CD4-positive, alpha-beta T cell (primary cell): ENCODE measurements at regions of chr11 and their contacts with region 1.

Region 1: GRCh38 chr11:34051349-34052035 is at the start of gene CAPRIN1:
- DNase-seq: peak; percentile 70 to 93 (median 80)
- ATAC-seq: peak; percentile 69
- H3K4me3 ChIP-seq: peak within 1 kb of the TSS; percentile 99
- H3K4me3 Mint-ChIP-seq: peak within 1 kb of the TSS; percentile 95
- H3K27ac ChIP-seq: peak within 1 kb of the TSS; percentile 98 to 99
- H3K27ac Mint-ChIP-seq: peak within 1 kb of the TSS; percentile 100
- H3K4me1 ChIP-seq: peaks cover 25% of the 10 kb centered on the region
- H3K4me1 Mint-ChIP-seq: peaks cover 26% of the 10 kb centered on the region
- H3K27me3 ChIP-seq: no peaks in the 10 kb centered on the region
- H3K27me3 Mint-ChIP-seq: no peaks in the 10 kb centered on the region
- CTCF ChIP-seq: no peak
- total RNA-seq, gene CAPRIN1: 107 TPM

Region 2: DNA sequence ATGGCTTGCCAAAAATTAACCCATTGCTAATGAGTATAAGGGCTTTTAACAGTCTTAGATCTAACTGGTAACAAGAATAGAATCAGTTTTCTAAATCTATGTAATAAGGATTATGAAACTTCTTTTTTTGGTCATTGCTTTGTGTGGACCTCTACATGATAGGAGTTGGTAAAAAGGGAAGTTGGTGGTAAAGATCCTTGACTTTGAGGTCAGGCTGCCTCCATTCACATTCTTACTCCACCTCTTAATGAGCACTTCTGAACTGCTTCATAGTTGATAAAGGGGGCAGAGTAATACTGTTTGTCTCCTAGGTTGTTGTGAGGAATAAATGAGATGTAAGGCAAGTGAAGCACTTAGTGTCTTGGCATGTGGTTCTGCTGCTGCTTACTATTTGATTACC is 1457.2 kb before region 1 on chr11:
- CTCF ChIA-PET with region 1: no interaction called
- POLR2A ChIA-PET with region 1: no interaction called
- intact Hi-C with region 1: loop called in 1 of 2 experiments (anchors 5 kb)
- DNase-seq: no peak
- ATAC-seq: no peak
- H3K4me3 ChIP-seq: no peak overlapping the region
- H3K4me3 Mint-ChIP-seq: no peak overlapping the region
- H3K27ac ChIP-seq: no peak overlapping the region
- H3K27ac Mint-ChIP-seq: no peak overlapping the region
- H3K4me1 ChIP-seq: no peaks in the 10 kb centered on the region
- H3K4me1 Mint-ChIP-seq: peaks cover 29% of the 10 kb centered on the region
- H3K27me3 ChIP-seq: no peaks in the 10 kb centered on the region
- H3K27me3 Mint-ChIP-seq: no peaks in the 10 kb centered on the region
- CTCF ChIP-seq: no peak

Region 3: GRCh38 chr11:33970984-33971466 is 80.5 kb before region 1 on chr11:
- CTCF ChIA-PET with region 1: no interaction called
- POLR2A ChIA-PET with region 1: no interaction called
- intact Hi-C with region 1: no loop called
- DNase-seq: peak in 5 of 14 experiments; percentile 4 to 49 (median 24)
- ATAC-seq: no peak
- H3K4me3 ChIP-seq: no peak overlapping the region
- H3K4me3 Mint-ChIP-seq: no peak overlapping the region
- H3K27ac ChIP-seq: no peak overlapping the region
- H3K27ac Mint-ChIP-seq: no peak overlapping the region
- H3K4me1 ChIP-seq: no peaks in the 10 kb centered on the region
- H3K4me1 Mint-ChIP-seq: no peaks in the 10 kb centered on the region
- H3K27me3 ChIP-seq: peaks cover 0 to 3% of the 10 kb centered on the region in 2 experiments
- H3K27me3 Mint-ChIP-seq: peaks cover 5% of the 10 kb centered on the region
- CTCF ChIP-seq: no peak

Region 4: GRCh38 chr11:33996498-33997454 is 54.7 kb before region 1 on chr11:
- CTCF ChIA-PET with region 1: interaction called, 8 read pairs
- POLR2A ChIA-PET with region 1: interaction called, 3 read pairs
- intact Hi-C with region 1: loop called (anchors 2 to 5 kb)
- DNase-seq: peak; percentile 53 to 85 (median 66)
- ATAC-seq: peak; percentile 100
- H3K4me3 ChIP-seq: no peak overlapping the region
- H3K4me3 Mint-ChIP-seq: peak overlapping the region; percentile 55
- H3K27ac ChIP-seq: no peak overlapping the region
- H3K27ac Mint-ChIP-seq: no peak overlapping the region
- H3K4me1 ChIP-seq: peaks cover 7% of the 10 kb centered on the region
- H3K4me1 Mint-ChIP-seq: peaks cover 7% of the 10 kb centered on the region
- H3K27me3 ChIP-seq: no peaks in the 10 kb centered on the region
- H3K27me3 Mint-ChIP-seq: peaks cover 23% of the 10 kb centered on the region
- CTCF ChIP-seq: peak; percentile 76

Region 5: GRCh38 chr11:34075178-34075820 is 23.8 kb after region 1 on chr11:
- CTCF ChIA-PET with region 1: interaction called, 5 read pairs
- POLR2A ChIA-PET with region 1: interaction called, 4 read pairs
- intact Hi-C with region 1: loop called in 1 of 2 experiments (anchors 2 kb)
- DNase-seq: no peak
- ATAC-seq: no peak
- H3K4me3 ChIP-seq: no peak overlapping the region
- H3K4me3 Mint-ChIP-seq: no peak overlapping the region
- H3K27ac ChIP-seq: peak overlapping the region; percentile 1 to 13
- H3K27ac Mint-ChIP-seq: peak overlapping the region; percentile 67
- H3K4me1 ChIP-seq: peaks cover 14% of the 10 kb centered on the region
- H3K4me1 Mint-ChIP-seq: peaks cover 57% of the 10 kb centered on the region
- H3K27me3 ChIP-seq: no peaks in the 10 kb centered on the region
- H3K27me3 Mint-ChIP-seq: no peaks in the 10 kb centered on the region
- CTCF ChIP-seq: no peak

Region 6: DNA sequence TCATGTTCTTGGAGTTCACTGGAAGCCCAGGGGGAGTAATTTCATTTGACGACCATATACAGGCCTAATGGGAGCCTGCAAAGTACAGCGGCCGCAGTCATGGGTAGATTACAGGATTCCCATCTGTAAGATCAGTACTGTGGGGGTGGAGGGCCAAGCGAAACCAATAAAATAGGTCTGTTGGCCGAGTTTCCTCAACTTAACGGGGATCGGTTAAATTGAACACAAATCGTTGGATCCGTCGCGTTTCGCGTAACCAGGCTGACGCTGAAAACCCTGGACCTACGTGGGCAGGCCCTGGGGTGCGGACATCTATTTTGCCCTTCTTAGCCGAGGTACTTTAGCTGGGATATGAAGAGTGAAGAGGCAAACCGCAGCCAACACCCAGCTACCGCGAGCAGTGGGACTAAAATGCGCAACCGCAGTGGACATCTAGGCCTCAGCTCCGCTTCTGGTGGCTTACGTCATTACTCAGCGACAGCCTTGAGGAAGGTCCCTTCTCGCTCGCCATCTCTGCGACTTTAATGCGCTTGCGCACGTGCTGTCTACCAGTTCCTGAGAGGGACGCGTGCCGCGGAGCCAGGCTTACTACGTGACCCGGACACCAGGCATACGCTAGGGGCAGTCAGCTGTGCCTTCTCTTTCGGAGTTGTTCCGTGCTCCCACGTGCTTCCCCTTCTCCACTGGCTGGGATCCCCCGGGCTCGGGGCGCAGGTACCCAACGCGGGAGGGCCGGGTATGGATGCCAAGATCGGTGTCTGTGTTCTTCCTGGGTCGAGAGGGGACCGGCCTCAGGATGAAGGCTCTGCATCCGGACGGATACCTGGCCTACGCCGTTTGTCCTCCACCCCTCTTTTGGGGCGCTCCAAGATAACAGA is 53.8 kb after region 1 on chr11 and contains the start of gene NAT10:
- CTCF ChIA-PET with region 1: interaction called, 8 read pairs
- POLR2A ChIA-PET with region 1: interaction called, 118 read pairs
- intact Hi-C with region 1: loop called (anchors 1 kb)
- DNase-seq: peak; percentile 94 to 100 (median 97)
- ATAC-seq: peak; percentile 90
- H3K4me3 ChIP-seq: peak within 1 kb of the TSS; percentile 81
- H3K4me3 Mint-ChIP-seq: peak within 1 kb of the TSS; percentile 95
- H3K27ac ChIP-seq: peak within 1 kb of the TSS; percentile 91 to 95
- H3K27ac Mint-ChIP-seq: peak within 1 kb of the TSS; percentile 99
- H3K4me1 ChIP-seq: peaks cover 31% of the 10 kb centered on the region
- H3K4me1 Mint-ChIP-seq: peaks cover 69% of the 10 kb centered on the region
- H3K27me3 ChIP-seq: no peaks in the 10 kb centered on the region
- H3K27me3 Mint-ChIP-seq: peaks cover 4% of the 10 kb centered on the region
- CTCF ChIP-seq: no peak
- total RNA-seq, gene NAT10: 50.1 to 55.6 TPM

Region 7: GRCh38 chr11:34916015-34916842 is 864.7 kb after region 1 on chr11 and contains the starts of genes APIP and PDHX:
- CTCF ChIA-PET with region 1: no interaction called
- POLR2A ChIA-PET with region 1: no interaction called
- intact Hi-C with region 1: loop called in 1 of 2 experiments (anchors 2 kb)
- DNase-seq: peak; percentile 91 to 99 (median 95)
- ATAC-seq: peak; percentile 90
- H3K4me3 ChIP-seq: peak within 1 kb of the TSS; percentile 94
- H3K4me3 Mint-ChIP-seq: peak within 1 kb of the TSS; percentile 96
- H3K27ac ChIP-seq: peak within 1 kb of the TSS; percentile 80 to 93
- H3K27ac Mint-ChIP-seq: peak within 1 kb of the TSS; percentile 93
- H3K4me1 ChIP-seq: peaks cover 24% of the 10 kb centered on the region
- H3K4me1 Mint-ChIP-seq: peaks cover 57% of the 10 kb centered on the region
- H3K27me3 ChIP-seq: no peaks in the 10 kb centered on the region
- H3K27me3 Mint-ChIP-seq: no peaks in the 10 kb centered on the region
- CTCF ChIP-seq: no peak
- total RNA-seq, gene APIP: 7.1 to 8.3 TPM
- total RNA-seq, gene PDHX: 17.3 to 17.4 TPM